Activated B cell treated with CpG ODN at 0.5 μM for 24 hours (primary cell): ENCODE measurements at regions of chr11 and their contacts with region 1.

Region 1: GRCh38 chr11:122697636-122698167 is 42.2 kb downstream of the UBASH3B start:
- DNase-seq: no peak
- ATAC-seq: peak; percentile 91
- H3K4me3 Mint-ChIP-seq: peak overlapping the region; percentile 56
- H3K27ac Mint-ChIP-seq: peak overlapping the region; percentile 65
- H3K4me1 Mint-ChIP-seq: peaks cover 74% of the 10 kb centered on the region
- H3K27me3 Mint-ChIP-seq: no peaks in the 10 kb centered on the region
- CTCF ChIP-seq: no peak

Region 2: GRCh38 chr11:122707901-122708300 is 10.2 kb after region 1 on chr11:
- CTCF ChIA-PET with region 1: interaction called, 3 read pairs
- POLR2A ChIA-PET with region 1: interaction called, 4 read pairs
- intact Hi-C with region 1: loop called (anchors 1 kb)
- DNase-seq: no peak
- ATAC-seq: no peak
- H3K4me3 Mint-ChIP-seq: no peak overlapping the region
- H3K27ac Mint-ChIP-seq: no peak overlapping the region
- H3K4me1 Mint-ChIP-seq: peaks cover 29% of the 10 kb centered on the region
- H3K27me3 Mint-ChIP-seq: no peaks in the 10 kb centered on the region
- CTCF ChIP-seq: no peak

Region 3: GRCh38 chr11:122717264-122717867 is 19.7 kb after region 1 on chr11:
- CTCF ChIA-PET with region 1: interaction called, 3 read pairs
- POLR2A ChIA-PET with region 1: interaction called, 5 read pairs
- intact Hi-C with region 1: loop called (anchors 1 kb)
- DNase-seq: peak; percentile 38
- ATAC-seq: peak; percentile 69
- H3K4me3 Mint-ChIP-seq: peak overlapping the region; percentile 47
- H3K27ac Mint-ChIP-seq: peak overlapping the region; percentile 80
- H3K4me1 Mint-ChIP-seq: peaks cover 83% of the 10 kb centered on the region
- H3K27me3 Mint-ChIP-seq: peaks cover 2% of the 10 kb centered on the region
- CTCF ChIP-seq: no peak

Region 4: GRCh38 chr11:122796128-122796717 is 98.5 kb after region 1 on chr11:
- CTCF ChIA-PET with region 1: no interaction called
- POLR2A ChIA-PET with region 1: no interaction called
- intact Hi-C with region 1: no loop called
- DNase-seq: peak; percentile 52
- ATAC-seq: peak; percentile 97
- H3K4me3 Mint-ChIP-seq: no peak overlapping the region
- H3K27ac Mint-ChIP-seq: no peak overlapping the region
- H3K4me1 Mint-ChIP-seq: peaks cover 4% of the 10 kb centered on the region
- H3K27me3 Mint-ChIP-seq: no peaks in the 10 kb centered on the region
- CTCF ChIP-seq: peak; percentile 39